ENCODE measurements at regions of chr20 and their contacts with region 1.

Region 1: DNA sequence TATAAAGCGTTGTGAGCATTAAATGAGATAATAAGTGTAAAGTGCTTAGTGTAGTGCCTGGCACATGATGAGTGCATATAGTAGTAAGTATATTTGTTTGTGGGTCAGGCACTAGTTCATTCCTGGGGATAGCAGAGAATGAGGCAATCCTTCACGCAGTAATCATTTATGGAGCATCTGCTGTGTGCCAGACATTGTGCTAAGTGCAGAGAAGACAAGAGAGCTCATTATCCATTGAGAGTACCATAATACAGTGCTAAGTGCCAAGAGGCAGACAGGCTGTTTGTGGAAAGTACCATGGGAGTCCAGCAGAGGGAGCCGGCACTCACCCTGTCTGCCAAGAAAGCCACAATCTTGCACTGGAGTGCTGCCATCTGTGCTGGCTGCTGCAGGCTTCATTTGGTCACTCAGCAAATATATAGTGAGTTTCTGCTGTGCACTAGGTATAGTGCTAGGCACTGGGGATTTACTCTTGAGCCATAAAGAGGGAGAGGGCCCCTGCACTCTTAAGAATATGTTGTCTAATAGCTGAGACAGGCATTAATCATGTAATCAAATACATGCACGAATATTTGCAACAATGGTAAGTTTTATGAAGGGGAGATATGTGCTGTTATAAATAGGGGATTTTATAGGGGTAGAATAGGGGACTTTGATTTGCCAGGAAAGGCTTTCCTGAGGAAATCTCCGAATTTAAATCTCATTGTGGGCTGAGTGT is 12.9 kb upstream of the MROH8 start:
- DNase-seq: peak; percentile 82
- H3K4me3 Mint-ChIP-seq: no peak overlapping the region
- H3K27ac Mint-ChIP-seq: peak overlapping the region; percentile 53
- H3K4me1 Mint-ChIP-seq: peaks cover 77% of the 10 kb centered on the region
- H3K27me3 Mint-ChIP-seq: no peaks in the 10 kb centered on the region

Region 2: GRCh38 chr20:37007898-37008649 is 184.2 kb before region 1 on chr20:
- CTCF ChIA-PET with region 1: interaction called, 15 read pairs
- DNase-seq: peak; percentile 57
- H3K4me3 Mint-ChIP-seq: no peak overlapping the region
- H3K27ac Mint-ChIP-seq: peak overlapping the region; percentile 78
- H3K4me1 Mint-ChIP-seq: peaks cover 50% of the 10 kb centered on the region
- H3K27me3 Mint-ChIP-seq: no peaks in the 10 kb centered on the region

Region 3: GRCh38 chr20:37178839-37179670 is 13.2 kb before region 1 on chr20 and contains the starts of genes MROH8 and RPN2:
- CTCF ChIA-PET with region 1: interaction called, 23 read pairs
- DNase-seq: peak; percentile 98
- H3K4me3 Mint-ChIP-seq: peak within 1 kb of the TSS; percentile 92
- H3K27ac Mint-ChIP-seq: peak within 1 kb of the TSS; percentile 96
- H3K4me1 Mint-ChIP-seq: peaks cover 41% of the 10 kb centered on the region
- H3K27me3 Mint-ChIP-seq: no peaks in the 10 kb centered on the region

Region 4: GRCh38 chr20:37202267-37202943 is 10.1 kb after region 1 on chr20:
- CTCF ChIA-PET with region 1: interaction called, 19 read pairs
- DNase-seq: peak; percentile 53
- H3K4me3 Mint-ChIP-seq: no peak overlapping the region
- H3K27ac Mint-ChIP-seq: no peak overlapping the region
- H3K4me1 Mint-ChIP-seq: no peaks in the 10 kb centered on the region
- H3K27me3 Mint-ChIP-seq: no peaks in the 10 kb centered on the region

Region 5: DNA sequence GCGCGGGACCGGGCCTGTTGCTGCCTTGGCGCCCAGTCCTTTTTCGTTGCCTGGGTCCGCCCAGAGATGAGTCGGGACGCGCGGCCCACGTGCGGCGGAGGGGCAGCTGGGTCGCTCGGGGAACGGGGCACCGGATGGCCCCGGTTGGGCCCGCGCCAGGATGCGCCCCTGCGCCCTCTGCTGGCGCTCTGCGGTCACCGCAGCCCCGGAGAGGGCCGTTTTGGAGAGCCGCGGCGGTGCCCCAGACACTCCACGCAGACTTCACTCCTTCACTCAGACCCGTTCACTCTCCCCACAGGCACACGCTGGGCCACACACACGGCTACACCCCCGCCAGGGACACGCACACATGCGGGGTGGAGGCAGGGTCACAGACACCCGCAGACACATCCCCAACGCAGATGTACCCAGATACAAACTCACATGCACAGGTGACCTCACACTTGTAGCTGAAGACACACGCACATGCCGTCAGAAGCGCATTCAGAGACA is 192.4 kb after region 1 on chr20:
- CTCF ChIA-PET with region 1: interaction called, 16 read pairs
- DNase-seq: peak; percentile 82
- H3K4me3 Mint-ChIP-seq: peak overlapping the region; percentile 75
- H3K27ac Mint-ChIP-seq: no peak overlapping the region
- H3K4me1 Mint-ChIP-seq: peaks cover 4% of the 10 kb centered on the region
- H3K27me3 Mint-ChIP-seq: peaks cover 36% of the 10 kb centered on the region

Region 6: DNA sequence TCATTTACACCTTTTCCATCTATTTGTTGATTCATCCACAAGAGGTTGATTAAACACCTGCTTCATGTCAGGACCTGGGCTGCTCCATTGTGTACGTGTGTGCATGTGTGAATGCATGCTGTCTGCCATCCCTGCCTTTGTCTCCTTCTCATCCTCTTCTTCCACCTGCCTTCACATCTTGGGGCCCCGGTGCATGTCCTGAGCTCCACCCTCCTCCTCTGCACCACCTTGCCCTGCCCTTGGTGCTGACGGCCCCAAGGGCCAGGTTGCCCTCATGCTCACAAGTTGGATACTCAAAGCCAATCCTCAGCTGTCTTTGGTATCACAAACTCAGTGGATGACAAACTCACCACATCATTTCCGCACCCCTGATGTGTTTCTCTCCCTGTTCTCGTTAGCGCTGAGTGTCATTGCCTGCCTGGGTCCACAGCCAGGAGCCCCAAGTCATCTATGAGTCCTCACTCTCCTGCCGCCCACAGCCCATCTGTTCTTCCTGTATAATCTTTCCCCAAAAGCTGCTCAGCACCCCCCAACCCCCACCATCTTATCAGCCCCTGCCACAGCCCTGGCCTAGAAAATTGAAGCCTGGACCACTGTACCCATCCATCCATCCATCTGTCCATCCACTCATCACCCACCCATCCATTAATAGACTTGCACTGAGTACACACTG is 238.6 kb after region 1 on chr20:
- CTCF ChIA-PET with region 1: no interaction called
- DNase-seq: no peak
- H3K4me3 Mint-ChIP-seq: no peak overlapping the region
- H3K27ac Mint-ChIP-seq: no peak overlapping the region
- H3K4me1 Mint-ChIP-seq: no peaks in the 10 kb centered on the region
- H3K27me3 Mint-ChIP-seq: no peaks in the 10 kb centered on the region